Activated CD4-positive, alpha-beta memory T cell treated with anti-CD3 and anti-CD28 coated beads, Interleukin-2, amount 10 ng/mL, durations not matched to agents 7 days and 5 days (primary cell): ENCODE measurements at regions of chr5 and their contacts with region 1.

Region 1: GRCh38 chr5:173917788-173918786 is 29.9 kb downstream of the CPEB4 start:
- DNase-seq: peak; percentile 56
- H3K4me3 Mint-ChIP-seq: no peak overlapping the region
- H3K27ac Mint-ChIP-seq: no peak overlapping the region
- H3K4me1 Mint-ChIP-seq: peaks cover 3% of the 10 kb centered on the region
- H3K27me3 Mint-ChIP-seq: no peaks in the 10 kb centered on the region

Region 2: DNA sequence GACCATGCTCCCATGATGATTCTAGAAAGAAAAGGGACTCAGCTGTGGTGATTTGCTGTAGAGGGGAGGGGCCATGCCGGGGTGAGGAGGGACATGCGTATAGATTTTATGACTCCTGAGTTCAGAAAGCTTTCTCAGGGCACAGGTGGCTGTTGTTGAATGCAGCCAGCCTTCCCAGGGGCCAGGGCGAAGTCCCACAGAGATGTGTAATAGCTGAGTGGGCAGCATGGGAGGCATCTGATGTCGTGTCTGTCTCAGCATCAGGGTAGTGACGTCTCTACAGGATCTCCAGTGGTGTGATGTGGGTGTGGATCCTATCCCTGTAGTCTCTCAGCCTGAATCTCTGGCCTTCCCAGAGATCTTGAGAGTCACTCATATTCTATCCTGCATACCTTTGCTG is 293.8 kb before region 1 on chr5:
- CTCF ChIA-PET with region 1: no interaction called
- POLR2A ChIA-PET with region 1: no interaction called
- DNase-seq: no peak
- H3K4me3 Mint-ChIP-seq: no peak overlapping the region
- H3K27ac Mint-ChIP-seq: no peak overlapping the region
- H3K4me1 Mint-ChIP-seq: peaks cover 3% of the 10 kb centered on the region
- H3K27me3 Mint-ChIP-seq: no peaks in the 10 kb centered on the region

Region 3: DNA sequence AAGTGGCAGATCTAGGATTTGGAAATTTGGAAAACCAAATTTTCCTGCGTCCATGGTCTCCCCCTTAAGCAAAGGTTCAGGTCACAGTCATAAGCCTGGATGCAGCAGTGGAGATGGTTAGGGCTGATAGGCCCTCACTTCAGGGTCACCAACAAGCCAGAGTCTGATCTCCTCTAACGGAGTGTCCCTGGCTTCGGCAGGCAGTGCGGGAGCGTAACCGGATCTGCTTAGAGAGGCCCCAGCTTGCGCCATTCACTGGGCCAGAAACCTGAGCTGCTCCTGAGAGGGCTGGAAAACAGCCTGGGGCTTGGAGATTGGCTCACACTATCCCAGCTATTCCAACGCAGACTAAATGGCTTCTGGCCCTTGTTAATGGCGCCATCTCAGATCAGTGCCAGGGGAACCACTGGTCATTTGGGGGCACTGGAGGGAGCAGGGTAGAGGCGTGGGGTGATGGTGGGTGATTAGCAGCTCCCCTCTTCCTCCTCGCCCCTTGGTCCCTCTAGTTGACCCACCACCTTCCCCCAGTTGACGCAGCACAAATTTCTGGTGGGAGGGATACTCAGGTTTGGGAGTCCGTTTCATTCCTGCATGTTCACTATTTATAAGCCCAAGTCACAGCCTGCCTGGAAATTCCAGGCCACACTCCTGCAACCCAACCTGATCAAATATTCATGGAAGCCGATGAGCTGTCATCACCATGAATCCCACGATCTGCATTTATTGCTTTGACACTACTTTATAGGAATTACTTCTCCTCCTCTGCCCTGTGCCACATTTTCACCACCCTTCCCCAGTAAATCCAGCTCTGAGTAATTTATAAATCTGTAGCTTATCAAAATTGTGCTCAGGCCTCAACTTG is 164.5 kb before region 1 on chr5:
- CTCF ChIA-PET with region 1: no interaction called
- POLR2A ChIA-PET with region 1: no interaction called
- DNase-seq: no peak
- H3K4me3 Mint-ChIP-seq: no peak overlapping the region
- H3K27ac Mint-ChIP-seq: no peak overlapping the region
- H3K4me1 Mint-ChIP-seq: no peaks in the 10 kb centered on the region
- H3K27me3 Mint-ChIP-seq: no peaks in the 10 kb centered on the region

Region 4: DNA sequence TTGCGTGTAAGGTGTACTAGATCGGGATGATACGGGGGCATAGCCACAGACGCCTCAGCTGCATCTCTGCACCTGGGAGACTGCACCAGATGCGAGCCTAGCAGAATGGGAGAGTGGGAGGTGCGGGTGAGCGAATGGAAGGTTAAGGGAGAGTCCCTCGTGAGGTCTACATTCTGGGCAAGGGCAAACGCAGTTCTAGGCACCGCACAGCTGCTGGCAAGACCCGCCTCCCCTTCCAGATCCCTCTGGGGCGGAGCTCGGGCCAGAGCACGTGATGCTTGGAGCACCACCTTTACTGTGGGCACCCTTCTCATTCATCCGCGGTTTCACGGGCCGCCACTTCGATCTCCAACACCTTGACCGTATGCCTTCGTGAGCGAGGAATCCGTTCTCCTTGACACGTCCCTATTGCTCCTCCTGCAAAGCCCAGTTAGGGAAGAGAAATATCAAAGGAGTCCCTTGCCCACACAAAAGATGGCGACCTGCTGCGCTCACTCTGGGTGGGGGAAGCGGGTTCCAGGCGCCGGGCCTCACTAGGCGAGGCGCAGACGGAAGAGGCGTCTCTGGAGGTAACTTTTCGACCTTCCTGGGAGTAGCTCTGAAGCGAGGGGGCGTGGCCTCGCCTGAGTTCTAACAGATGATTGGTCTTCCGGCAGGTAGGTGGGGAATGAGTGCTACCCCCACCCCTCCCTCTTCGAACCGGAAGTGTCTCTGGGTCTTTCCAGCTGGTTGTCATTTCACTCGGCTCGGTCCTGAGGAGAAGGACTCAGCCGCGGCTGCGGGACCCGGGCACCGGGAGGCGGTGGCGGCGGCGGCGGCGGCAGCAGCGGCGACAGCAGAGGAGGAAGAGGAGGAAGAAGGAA is 30.2 kb before region 1 on chr5 and contains the start of gene CPEB4:
- CTCF ChIA-PET with region 1: interaction called, 10 read pairs
- POLR2A ChIA-PET with region 1: interaction called, 19 read pairs
- DNase-seq: peak; percentile 97
- H3K4me3 Mint-ChIP-seq: peak within 1 kb of the TSS; percentile 99
- H3K27ac Mint-ChIP-seq: peak within 1 kb of the TSS; percentile 91
- H3K4me1 Mint-ChIP-seq: peaks cover 83% of the 10 kb centered on the region
- H3K27me3 Mint-ChIP-seq: no peaks in the 10 kb centered on the region
- total RNA-seq, gene CPEB4: 17.3 to 19.5 TPM

Region 5: GRCh38 chr5:173935396-173935795 is 17.3 kb after region 1 on chr5:
- CTCF ChIA-PET with region 1: no interaction called
- POLR2A ChIA-PET with region 1: no interaction called
- DNase-seq: no peak
- H3K4me3 Mint-ChIP-seq: no peak overlapping the region
- H3K27ac Mint-ChIP-seq: no peak overlapping the region
- H3K4me1 Mint-ChIP-seq: no peaks in the 10 kb centered on the region
- H3K27me3 Mint-ChIP-seq: no peaks in the 10 kb centered on the region

Region 6: GRCh38 chr5:173953528-173954090 is 35.5 kb after region 1 on chr5:
- CTCF ChIA-PET with region 1: no interaction called
- POLR2A ChIA-PET with region 1: no interaction called
- DNase-seq: no peak
- H3K4me3 Mint-ChIP-seq: no peak overlapping the region
- H3K27ac Mint-ChIP-seq: no peak overlapping the region
- H3K4me1 Mint-ChIP-seq: no peaks in the 10 kb centered on the region
- H3K27me3 Mint-ChIP-seq: no peaks in the 10 kb centered on the region